ENCODE measurements at regions of chr5 and their contacts with region 1.

Region 1: GRCh38 chr5:116084871-116085715 is at the start of gene COMMD10:
- DNase-seq: peak; percentile 70 to 84 (median 77)
- H3K4me3 ChIP-seq: peak within 1 kb of the TSS; percentile 69
- H3K27ac ChIP-seq: peak within 1 kb of the TSS; percentile 79 to 82
- H3K4me1 ChIP-seq: peaks cover 8% of the 10 kb centered on the region
- H3K27me3 ChIP-seq: no peaks in the 10 kb centered on the region
- CTCF ChIP-seq: no peak
- EP300 ChIP-seq: no peak
- POLR2A ChIP-seq: peak; percentile 63
- total RNA-seq, gene COMMD10: 24.1 to 45.9 (median 26.5) TPM

Region 2: GRCh38 chr5:115625579-115626444 is 459.3 kb before region 1 on chr5 and contains the start of gene TMED7:
- intact Hi-C with region 1: loop called in 1 of 4 experiments (anchors 10 kb)
- DNase-seq: peak; percentile 99 to 100 (median 100)
- H3K4me3 ChIP-seq: peak within 1 kb of the TSS; percentile 94
- H3K27ac ChIP-seq: peak within 1 kb of the TSS; percentile 82 to 83
- H3K4me1 ChIP-seq: peaks cover 7% of the 10 kb centered on the region
- H3K27me3 ChIP-seq: no peaks in the 10 kb centered on the region
- CTCF ChIP-seq: peak in 2 of 3 donors; percentile 9 to 12
- EP300 ChIP-seq: peak; percentile 74
- POLR2A ChIP-seq: peak; percentile 40
- total RNA-seq, gene TMED7: 59.3 to 84.2 (median 69.9) TPM

Region 3: GRCh38 chr5:115738807-115739206 is 346.3 kb before region 1 on chr5:
- intact Hi-C with region 1: no loop called
- DNase-seq: no peak
- H3K4me3 ChIP-seq: no peak overlapping the region
- H3K27ac ChIP-seq: no peak overlapping the region
- H3K4me1 ChIP-seq: no peaks in the 10 kb centered on the region
- H3K27me3 ChIP-seq: no peaks in the 10 kb centered on the region
- CTCF ChIP-seq: no peak
- EP300 ChIP-seq: no peak
- POLR2A ChIP-seq: no peak

Region 4: DNA sequence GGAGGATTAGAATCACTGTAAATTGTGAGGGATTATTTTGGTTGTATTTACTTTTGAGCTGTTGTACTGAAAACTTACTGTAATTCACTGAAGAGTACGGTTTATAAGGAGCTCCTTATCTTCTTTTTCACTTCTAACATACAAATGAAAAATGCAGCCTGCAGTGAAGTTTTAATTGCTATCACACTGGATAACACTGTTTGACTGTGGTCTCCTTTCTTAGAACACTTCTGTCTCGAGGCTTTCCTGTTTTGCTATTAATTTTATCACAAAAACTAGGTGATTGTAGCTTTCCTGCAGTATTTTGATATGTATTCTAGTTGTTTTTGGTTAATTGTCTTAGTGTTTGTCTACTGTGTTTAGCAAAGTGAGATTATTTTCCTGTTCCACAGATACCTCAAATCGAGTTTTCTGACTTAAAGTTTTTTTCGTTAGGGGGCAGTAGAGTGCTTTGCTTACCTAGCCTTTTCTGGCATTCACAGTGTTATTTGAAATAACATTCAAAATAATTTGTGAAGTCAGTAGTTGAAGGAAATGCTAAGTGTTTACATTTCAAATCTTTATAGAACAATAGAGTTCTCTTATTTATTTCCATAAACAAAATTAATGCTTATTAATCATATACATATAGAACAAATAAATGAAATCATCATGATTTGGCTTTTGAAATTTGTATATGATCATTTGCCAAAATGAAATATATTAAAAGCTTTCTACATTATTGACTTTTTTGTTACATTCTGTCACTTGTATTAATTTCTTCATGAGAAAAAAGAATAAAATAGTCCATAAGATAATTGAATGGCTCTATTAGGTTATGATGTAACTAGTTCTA is 52.7 kb after region 1 on chr5:
- intact Hi-C with region 1: loop called in 1 of 4 experiments (anchors 2 kb)
- DNase-seq: no peak
- H3K4me3 ChIP-seq: no peak overlapping the region
- H3K27ac ChIP-seq: no peak overlapping the region
- H3K4me1 ChIP-seq: no peaks in the 10 kb centered on the region
- H3K27me3 ChIP-seq: no peaks in the 10 kb centered on the region
- CTCF ChIP-seq: peak; percentile 55 to 74 (median 62)
- EP300 ChIP-seq: no peak
- POLR2A ChIP-seq: no peak

Region 5: DNA sequence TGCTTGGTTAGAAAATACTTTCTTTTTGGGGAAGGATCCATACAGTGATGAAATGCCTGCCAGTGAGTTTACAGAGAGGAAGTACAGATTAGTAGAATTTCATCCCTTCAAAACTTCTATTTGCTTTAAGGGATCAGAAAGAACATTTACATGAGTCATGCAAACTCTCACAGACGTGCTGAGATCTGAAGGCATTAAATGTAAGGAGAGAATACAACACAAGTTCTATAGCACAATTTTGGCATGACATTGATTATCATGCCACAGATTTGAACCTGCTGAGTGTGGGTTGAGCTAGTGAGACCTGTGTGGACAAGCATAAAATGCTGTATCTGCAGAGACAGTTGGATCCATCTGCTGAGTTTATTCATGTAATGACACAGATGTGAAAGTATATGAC is 1103.1 kb after region 1 on chr5:
- intact Hi-C with region 1: no loop called
- DNase-seq: no peak
- H3K4me3 ChIP-seq: no peak overlapping the region
- H3K27ac ChIP-seq: no peak overlapping the region
- H3K4me1 ChIP-seq: no peaks in the 10 kb centered on the region
- H3K27me3 ChIP-seq: no peaks in the 10 kb centered on the region
- CTCF ChIP-seq: no peak
- EP300 ChIP-seq: no peak
- POLR2A ChIP-seq: no peak